Heart left ventricle (tissue), 16 donors: ENCODE measurements at regions of chr18 and their contacts with region 1.

Region 1: DNA sequence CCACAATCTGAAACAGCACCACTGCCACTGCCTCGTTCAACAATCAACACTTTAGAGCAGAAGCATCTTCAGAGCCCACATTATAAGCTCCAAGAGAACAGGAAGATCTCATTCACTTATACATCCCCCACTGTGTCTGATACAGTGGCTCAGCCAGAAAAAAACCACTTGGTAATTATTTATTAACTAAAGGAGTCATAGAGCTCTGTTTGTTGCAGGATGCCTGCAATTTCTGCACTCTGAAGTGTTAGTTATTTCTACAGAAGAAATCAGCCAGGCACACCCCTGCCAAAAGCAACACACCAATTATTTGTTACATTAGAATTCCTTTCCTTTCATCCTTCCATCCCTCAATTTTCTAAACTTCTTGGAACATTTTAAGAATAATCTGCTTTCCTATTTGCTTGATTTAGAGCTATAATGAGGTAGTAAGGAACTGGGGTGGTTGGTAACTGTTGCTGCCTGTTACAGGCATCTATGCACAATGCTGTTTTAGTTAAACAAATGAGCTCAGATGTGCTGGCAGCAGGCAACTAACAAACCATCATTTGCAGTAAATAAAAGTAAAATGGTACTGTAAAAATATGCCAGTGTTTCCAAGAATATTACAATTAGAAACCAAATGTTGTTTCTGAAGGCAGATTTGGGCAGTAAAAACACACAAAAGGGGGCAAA is 59.9 kb downstream of the DYM start:
- DNase-seq: no peak
- ATAC-seq: no peak
- H3K4me3 ChIP-seq: no peak overlapping the region
- H3K27ac ChIP-seq: no peak overlapping the region
- H3K4me1 ChIP-seq: peaks cover 0 to 23% (median 3%) of the 10 kb centered on the region in 12 donors
- H3K27me3 ChIP-seq: no peaks in the 10 kb centered on the region
- CTCF ChIP-seq: no peak
- POLR2A ChIP-seq: no peak

Region 2: DNA sequence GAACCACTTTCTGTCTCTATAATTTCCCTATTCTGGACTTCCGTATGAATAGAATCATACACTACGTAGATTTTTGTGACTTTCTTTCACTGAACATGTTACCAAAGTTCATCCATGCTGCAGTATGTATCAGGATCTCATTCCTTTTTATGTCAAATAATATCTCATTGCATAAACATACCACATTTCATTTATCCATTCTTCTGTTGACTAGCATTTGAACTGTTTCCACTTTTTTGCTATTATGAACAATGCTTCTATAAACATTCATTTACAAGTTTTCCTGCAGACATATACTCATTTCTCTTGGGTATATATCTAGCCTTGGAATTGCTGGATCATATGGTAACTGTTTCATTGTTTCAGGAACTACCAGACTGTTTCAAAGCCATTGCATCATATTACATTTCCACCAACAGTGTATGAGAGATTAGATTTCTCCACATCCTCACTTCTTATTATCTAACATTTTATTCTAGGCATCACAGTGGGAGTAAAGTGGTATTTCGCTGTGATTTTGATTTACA is 126.3 kb before region 1 on chr18:
- intact Hi-C with region 1: loop called in 1 of 10 experiments (anchors 10 kb)
- DNase-seq: no peak
- ATAC-seq: no peak
- H3K4me3 ChIP-seq: no peak overlapping the region
- H3K27ac ChIP-seq: no peak overlapping the region
- H3K4me1 ChIP-seq: peaks cover 0 to 5% (median 0%) of the 10 kb centered on the region in 12 donors
- H3K27me3 ChIP-seq: no peaks in the 10 kb centered on the region
- CTCF ChIP-seq: no peak
- POLR2A ChIP-seq: no peak